K562 (cell line): ENCODE measurements at regions of chr10 and their contacts with region 1.

Region 1: GRCh38 chr10:42782446-42783180 is at the start of gene BMS1:
- DNase-seq: peak; percentile 88 to 97 (median 90)
- ATAC-seq: peak; percentile 96
- H3K4me3 ChIP-seq: peak within 1 kb of the TSS; percentile 66
- H3K27ac ChIP-seq: peak within 1 kb of the TSS; percentile 91
- H3K4me1 ChIP-seq: peaks cover 0 to 12% of the 10 kb centered on the region in 2 experiments; a peak in 3 of 5 replicates
- H3K27me3 ChIP-seq: peaks cover 0 to 7% of the 10 kb centered on the region in 2 experiments; a peak in 2 of 5 replicates
- CTCF ChIP-seq: no peak
- EP300 ChIP-seq: peak; percentile 72
- POLR2A ChIP-seq: peak; percentile 99
- RAD21 ChIP-seq: peak in 1 of 2 experiments; percentile 33; a peak in 2 of 4 replicates
- polyA plus RNA-seq, gene BMS1: 11.1 to 25.7 TPM

Region 2: GRCh38 chr10:42753126-42753506 is 29.5 kb before region 1 on chr10:
- CTCF ChIA-PET with region 1: no interaction called
- POLR2A ChIA-PET with region 1: interaction called, 5 read pairs
- in situ Hi-C with region 1: no loop called
- intact Hi-C with region 1: loop called (anchors 2 kb)
- DNase-seq: peak; percentile 50 to 82 (median 58)
- ATAC-seq: peak; percentile 94
- H3K4me3 ChIP-seq: peak overlapping the region; percentile 29; the same call in 1 of the 2 replicates
- H3K27ac ChIP-seq: no peak overlapping the region
- H3K4me1 ChIP-seq: peaks cover 0 to 28% of the 10 kb centered on the region in 2 experiments; a peak in 2 of 5 replicates
- H3K27me3 ChIP-seq: peaks cover 0 to 26% of the 10 kb centered on the region in 2 experiments; a peak in 1 of 5 replicates
- CTCF ChIP-seq: peak; percentile 70 to 80 (median 71)
- EP300 ChIP-seq: no peak
- POLR2A ChIP-seq: no peak
- RAD21 ChIP-seq: peak; percentile 23 to 58; a peak in 3 of 4 replicates